ENCODE measurements at regions of chr20 and their contacts with region 1.

Region 1: DNA sequence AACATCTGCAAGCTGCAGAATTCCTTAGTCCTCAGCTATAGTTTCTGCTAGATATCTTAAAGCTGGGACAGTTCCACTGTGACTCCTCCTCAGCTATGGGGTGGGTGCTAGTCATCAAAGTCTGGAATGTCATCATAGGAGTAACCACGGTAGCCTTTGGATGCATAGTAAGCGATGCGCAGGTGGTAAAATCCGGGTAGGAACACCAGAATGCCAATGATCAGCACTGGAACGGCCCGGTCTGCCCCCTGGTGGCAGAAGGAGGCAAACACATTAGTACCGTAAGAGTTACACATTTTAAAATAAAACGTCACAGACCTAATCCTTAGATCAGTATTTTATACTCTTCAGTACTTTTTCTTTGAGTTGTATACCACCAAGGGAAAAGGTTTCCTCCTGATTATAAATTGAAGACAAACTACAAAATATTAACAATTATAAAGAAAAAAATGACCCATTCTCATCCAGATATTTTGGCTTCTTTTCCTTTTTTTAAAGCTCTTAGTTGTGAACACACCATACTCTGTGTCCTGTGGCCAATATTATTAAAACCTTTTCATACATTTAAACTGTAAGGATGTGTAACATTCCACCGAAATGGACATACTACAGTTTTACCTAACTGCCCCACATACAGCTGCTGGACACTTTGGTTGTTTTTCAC is 18.9 kb downstream of the PCNA start:
- DNase-seq: peak; percentile 76 to 92 (median 84)
- H3K4me3 ChIP-seq: no peak overlapping the region
- H3K27ac ChIP-seq: peak overlapping the region in 35 of 59 donors; percentile 2 to 73 (median 32)
- H3K27me3 ChIP-seq: no peaks in the 10 kb centered on the region
- CTCF ChIP-seq: peak; percentile 79 to 99 (median 93)

Region 2: DNA sequence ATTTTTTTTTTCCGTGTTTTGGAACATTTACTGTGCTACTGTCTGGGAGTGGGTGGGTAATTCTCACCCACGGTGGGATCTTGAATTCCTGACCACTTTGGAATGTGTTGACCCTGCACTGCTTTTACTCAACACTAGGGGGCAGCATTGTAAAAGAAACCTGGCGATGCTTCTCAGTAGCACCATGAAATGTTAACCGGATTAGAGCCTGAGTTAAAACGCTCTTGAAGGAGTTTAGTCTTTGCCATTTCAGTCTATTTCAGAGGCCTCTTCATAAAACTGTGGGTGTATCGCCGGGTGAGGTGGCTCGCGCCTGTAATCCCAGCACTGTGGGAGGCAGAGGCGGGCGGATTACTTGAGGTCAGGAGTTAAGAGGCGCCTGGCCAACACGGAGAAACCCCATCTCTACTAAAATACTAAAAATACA is 493.5 kb before region 1 on chr20:
- intact Hi-C with region 1: loop called (anchors 2 to 5 kb)
- DNase-seq: peak in 7 of 10 donors; percentile 32 to 70 (median 60)
- H3K4me3 ChIP-seq: peak overlapping the region in 6 of 59 donors; percentile 10 to 30 (median 14)
- H3K27ac ChIP-seq: peak overlapping the region in 42 of 59 donors; percentile 16 to 78 (median 52)
- H3K27me3 ChIP-seq: peaks cover 0 to 3% (median 0%) of the 10 kb centered on the region in 45 donors
- CTCF ChIP-seq: peak; percentile 93 to 100 (median 97)

Region 3: GRCh38 chr20:4956200-4956810 is 144.5 kb before region 1 on chr20:
- intact Hi-C with region 1: loop called in 1 of 2 experiments (anchors 10 kb)
- DNase-seq: no peak
- H3K4me3 ChIP-seq: no peak overlapping the region
- H3K27ac ChIP-seq: peak overlapping the region in 13 of 59 donors; percentile 1 to 57 (median 21)
- H3K27me3 ChIP-seq: no peaks in the 10 kb centered on the region
- CTCF ChIP-seq: peak; percentile 72 to 96 (median 90)

Region 4: GRCh38 chr20:5056801-5057599 is 43.8 kb before region 1 on chr20:
- intact Hi-C with region 1: no loop called
- DNase-seq: peak in 4 of 10 donors; percentile 12 to 50 (median 34)
- H3K4me3 ChIP-seq: no peak overlapping the region
- H3K27ac ChIP-seq: peak overlapping the region in 31 of 59 donors; percentile 6 to 69 (median 42)
- H3K27me3 ChIP-seq: no peaks in the 10 kb centered on the region
- CTCF ChIP-seq: peak in 15 of 56 donors; percentile 6 to 37 (median 23)

Region 5: DNA sequence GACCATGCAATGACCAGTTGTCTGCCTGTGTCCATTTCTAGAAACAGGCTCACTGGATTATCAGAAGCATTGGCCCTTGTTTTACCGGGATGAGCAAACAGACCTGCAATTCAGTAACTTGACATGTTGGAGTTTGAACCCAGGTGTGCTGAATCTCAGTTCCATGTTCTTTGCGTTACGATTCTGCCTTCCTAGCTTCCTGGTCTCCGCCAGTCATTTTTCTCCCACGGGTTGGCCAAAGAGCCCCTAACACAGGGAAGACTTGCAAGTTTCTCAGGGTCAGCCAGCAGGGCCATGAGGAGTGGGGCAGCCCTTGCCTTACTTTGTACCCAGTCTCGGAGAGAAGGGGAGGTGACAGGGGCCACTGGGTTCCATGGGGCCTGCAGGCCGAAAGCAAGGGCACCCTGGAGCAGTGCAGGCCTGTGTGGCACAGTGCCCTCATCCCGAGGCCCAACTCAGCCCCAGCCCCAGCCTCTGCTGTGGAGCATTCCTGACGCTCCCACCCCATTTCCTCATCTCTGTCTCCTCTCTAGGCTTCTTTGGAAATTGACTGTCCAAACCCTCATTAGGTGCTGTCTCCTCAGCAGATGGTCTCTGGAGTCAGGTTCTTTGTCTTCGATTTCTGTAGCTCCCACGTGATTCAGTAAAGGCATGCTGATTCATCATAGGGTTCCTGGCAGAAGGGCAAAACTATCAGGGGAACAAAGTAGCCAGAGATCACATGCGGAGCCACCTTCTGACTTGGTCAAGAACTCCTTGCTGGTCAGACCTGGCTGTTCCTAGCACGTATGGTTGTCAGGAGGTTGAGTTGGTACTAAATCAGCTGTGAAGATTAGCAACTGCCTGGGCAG is 49.6 kb after region 1 on chr20:
- intact Hi-C with region 1: no loop called
- DNase-seq: no peak
- H3K4me3 ChIP-seq: no peak overlapping the region
- H3K27ac ChIP-seq: peak overlapping the region in 46 of 59 donors; percentile 1 to 85 (median 52)
- H3K27me3 ChIP-seq: no peaks in the 10 kb centered on the region
- CTCF ChIP-seq: no peak

Region 6: DNA sequence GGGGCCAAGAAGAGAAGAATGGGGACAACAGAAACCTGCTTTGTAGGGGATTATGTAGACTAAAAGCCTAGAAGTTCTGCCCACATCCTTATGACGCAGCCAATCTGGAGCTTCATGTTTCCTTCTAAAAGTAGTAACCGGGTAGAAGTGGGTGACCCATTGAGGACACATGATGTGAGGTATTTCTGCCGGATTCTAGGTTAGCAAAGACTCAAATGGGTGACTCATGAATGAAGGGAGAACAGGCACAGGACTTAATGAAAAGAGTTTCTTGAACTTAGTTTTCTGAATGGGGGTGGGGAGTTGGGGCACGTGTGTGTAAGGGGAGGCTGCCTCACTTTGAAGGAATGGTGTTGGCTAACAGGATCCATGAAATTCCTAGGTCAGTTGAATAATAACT is 94.8 kb after region 1 on chr20:
- intact Hi-C with region 1: no loop called
- DNase-seq: peak in 1 of 10 donors; percentile 36
- H3K4me3 ChIP-seq: no peak overlapping the region
- H3K27ac ChIP-seq: peak overlapping the region in 39 of 59 donors; percentile 2 to 79 (median 59)
- H3K27me3 ChIP-seq: no peaks in the 10 kb centered on the region
- CTCF ChIP-seq: no peak

Region 7: DNA sequence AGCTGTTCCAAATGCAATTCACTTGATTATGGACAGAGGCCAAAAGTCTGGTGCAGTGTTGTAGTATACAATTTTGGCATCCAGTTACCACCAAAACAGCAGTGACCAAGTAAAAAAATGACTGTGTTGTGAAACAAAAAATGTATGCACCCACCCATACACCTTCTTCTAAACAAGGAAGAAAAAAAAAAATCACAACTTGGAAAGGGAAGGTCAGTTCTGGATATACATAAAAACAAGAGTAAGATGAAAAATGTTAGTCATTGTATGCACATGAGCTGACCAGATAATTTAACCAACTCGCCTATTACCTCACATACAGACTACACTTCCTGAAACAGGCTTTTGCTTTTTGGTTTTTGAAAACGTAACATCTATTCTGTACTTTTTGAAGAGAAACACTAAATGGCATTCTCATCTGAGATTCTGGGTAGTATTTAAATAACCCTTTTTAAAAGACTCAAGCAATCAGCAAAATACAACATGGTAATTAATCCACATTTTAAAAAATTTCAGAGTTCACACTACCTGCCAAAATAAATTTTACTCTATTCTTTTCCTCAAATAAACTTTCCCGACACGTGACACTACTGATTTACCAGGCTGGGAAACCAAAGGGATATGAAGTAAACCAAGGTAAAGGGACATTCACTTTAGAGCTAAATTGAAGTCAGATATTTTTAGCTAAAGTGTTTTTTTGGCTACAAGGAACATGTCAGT is 507.8 kb after region 1 on chr20:
- intact Hi-C with region 1: no loop called
- DNase-seq: no peak
- H3K4me3 ChIP-seq: peak overlapping the region in 57 of 59 donors; percentile 9 to 90 (median 77)
- H3K27ac ChIP-seq: peak overlapping the region in 56 of 59 donors; percentile 2 to 97 (median 91)
- H3K27me3 ChIP-seq: no peaks in the 10 kb centered on the region
- CTCF ChIP-seq: no peak

Measured in dorsolateral prefrontal cortex (tissue), 120 donors.